ENCODE measurements at regions of chr10 and their contacts with region 1.

Region 1: DNA sequence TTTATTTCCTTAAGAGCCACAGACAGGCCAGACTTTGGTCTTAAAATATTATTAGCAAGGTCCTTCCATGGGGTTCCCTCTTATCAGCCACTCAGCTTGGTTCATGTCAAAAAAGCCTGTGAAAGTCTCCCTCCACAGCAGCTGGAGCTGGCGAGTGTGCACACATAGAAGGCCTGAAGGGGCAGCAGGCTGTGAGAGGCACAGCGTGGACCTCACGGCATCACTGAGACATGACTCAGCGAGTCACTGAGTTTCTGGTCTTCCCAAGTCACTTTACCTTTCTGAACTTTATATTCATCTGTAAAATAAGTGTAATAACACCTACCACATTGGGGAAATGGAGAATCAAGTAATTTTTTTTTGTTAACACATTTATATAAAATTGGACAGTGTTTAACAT is 8.7 kb downstream of the TAF3 start:
- DNase-seq: no peak
- ATAC-seq: no peak
- H3K4me3 ChIP-seq: no peak overlapping the region
- H3K27ac ChIP-seq: no peak overlapping the region
- H3K4me1 ChIP-seq: peaks cover 0 to 22% of the 10 kb centered on the region in 2 donors
- H3K27me3 ChIP-seq: no peaks in the 10 kb centered on the region
- CTCF ChIP-seq: no peak
- POLR2A ChIP-seq: no peak

Region 2: DNA sequence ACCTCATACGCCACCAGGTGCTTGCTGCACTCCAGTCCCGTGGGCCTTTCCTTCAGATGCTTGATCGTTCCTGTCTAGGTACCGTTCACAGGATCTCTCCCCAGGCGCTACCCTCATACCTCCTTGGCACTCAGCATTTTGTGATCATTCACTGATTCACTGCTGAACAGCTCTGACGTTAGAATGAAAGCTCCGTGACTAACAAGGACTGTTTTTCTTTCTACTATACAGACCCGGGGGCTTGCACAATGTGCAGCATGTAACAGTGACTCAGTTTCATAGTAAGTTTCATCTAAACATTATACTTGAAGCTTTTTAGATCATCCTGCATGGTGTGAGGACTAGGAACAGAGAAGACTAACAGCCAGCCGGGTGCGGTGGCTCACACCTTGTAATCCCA is 59.8 kb before region 1 on chr10:
- in situ Hi-C with region 1: no loop called
- intact Hi-C with region 1: no loop called
- DNase-seq: no peak
- ATAC-seq: no peak
- H3K4me3 ChIP-seq: no peak overlapping the region
- H3K27ac ChIP-seq: no peak overlapping the region
- H3K4me1 ChIP-seq: no peaks in the 10 kb centered on the region
- H3K27me3 ChIP-seq: no peaks in the 10 kb centered on the region
- CTCF ChIP-seq: no peak
- POLR2A ChIP-seq: no peak

Region 3: DNA sequence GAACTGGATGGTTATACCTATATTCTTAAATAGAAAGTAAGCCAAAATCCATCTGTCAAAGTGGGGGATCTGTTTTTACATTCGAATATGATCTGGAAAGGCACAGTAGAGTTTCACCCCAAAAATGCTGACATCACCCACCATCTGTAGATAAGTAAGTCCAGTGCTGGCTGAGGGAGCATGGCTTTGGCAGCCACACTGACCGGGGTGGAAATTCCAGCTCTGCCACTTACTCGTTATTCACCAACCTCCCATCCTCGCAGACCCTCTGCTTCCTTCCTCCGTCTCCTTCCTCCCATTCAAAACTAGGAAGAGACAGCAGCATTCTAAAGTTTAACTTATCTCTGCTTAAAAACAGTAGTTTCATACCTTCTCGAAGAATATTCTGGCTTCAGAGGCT is 142.7 kb after region 1 on chr10:
- in situ Hi-C with region 1: no loop called
- intact Hi-C with region 1: loop called (anchors 10 kb)
- DNase-seq: no peak
- ATAC-seq: no peak
- H3K4me3 ChIP-seq: no peak overlapping the region
- H3K27ac ChIP-seq: no peak overlapping the region
- H3K4me1 ChIP-seq: no peaks in the 10 kb centered on the region
- H3K27me3 ChIP-seq: no peaks in the 10 kb centered on the region
- CTCF ChIP-seq: no peak
- POLR2A ChIP-seq: no peak

Measured in gastrocnemius medialis (tissue), 4 donors.